ENCODE measurements at regions of chr12 and their contacts with region 1.

Region 1: GRCh38 chr12:108618079-108618952 is 15.4 kb downstream of the SELPLG start:
- DNase-seq: peak; percentile 76 to 84 (median 82)
- H3K4me3 ChIP-seq: no peak overlapping the region
- H3K27ac ChIP-seq: no peak overlapping the region
- H3K4me1 ChIP-seq: peaks cover 3 to 47% (median 20%) of the 10 kb centered on the region in 4 experiments
- H3K27me3 ChIP-seq: no peaks in the 10 kb centered on the region

Region 2: GRCh38 chr12:107779077-107779831 is 839.1 kb before region 1 on chr12:
- CTCF ChIA-PET with region 1: no interaction called
- POLR2A ChIA-PET with region 1: no interaction called
- DNase-seq: peak in 2 of 3 donors; percentile 60
- H3K4me3 ChIP-seq: no peak overlapping the region
- H3K27ac ChIP-seq: no peak overlapping the region
- H3K4me1 ChIP-seq: peaks cover 12 to 42% (median 36%) of the 10 kb centered on the region in 4 experiments
- H3K27me3 ChIP-seq: peaks cover 2 to 35% (median 22%) of the 10 kb centered on the region in 5 experiments

Region 3: DNA sequence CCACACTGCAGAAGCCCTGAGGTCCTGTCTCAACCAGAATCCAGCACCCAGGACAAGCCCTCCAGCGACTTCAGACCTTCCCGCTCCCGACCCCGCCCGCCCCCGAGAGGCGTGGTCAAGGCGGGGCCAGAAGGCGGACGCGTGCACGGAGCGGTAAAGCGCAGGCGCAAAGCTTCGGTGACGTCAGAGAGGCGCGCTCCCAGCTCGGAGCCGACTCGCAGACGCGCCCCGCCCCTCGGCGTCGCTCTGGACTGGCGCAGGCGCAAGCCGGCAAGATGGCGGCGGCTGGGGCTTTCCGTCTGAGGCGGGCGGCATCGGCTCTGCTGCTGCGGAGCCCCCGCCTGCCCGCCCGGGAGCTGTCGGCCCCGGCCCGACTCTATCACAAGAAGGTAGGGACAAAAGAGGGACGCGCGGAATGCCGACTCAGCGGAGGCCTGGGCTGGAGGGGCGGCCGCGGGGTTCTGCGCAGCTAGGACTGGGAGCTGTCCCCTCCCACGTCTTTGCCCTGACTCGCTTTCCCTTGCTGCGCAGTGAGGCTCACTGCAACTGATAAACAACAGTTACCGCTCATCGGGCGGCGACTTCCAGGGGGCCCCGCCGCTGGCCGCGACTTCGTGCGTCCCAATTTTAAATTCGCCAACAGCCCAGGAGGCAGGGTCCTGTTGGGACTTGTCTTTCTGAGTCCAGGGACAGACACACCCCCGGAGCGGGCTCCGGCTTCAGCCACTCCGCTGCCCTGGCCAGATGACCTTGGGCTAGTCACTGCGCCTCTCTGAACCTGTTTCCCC is 55.8 kb before region 1 on chr12 and contains the start of gene ISCU:
- CTCF ChIA-PET with region 1: interaction called, 591 read pairs
- POLR2A ChIA-PET with region 1: interaction called, 10 read pairs
- DNase-seq: peak; percentile 96 to 98 (median 97)
- H3K4me3 ChIP-seq: peak within 1 kb of the TSS; percentile 90 to 100 (median 99)
- H3K27ac ChIP-seq: peak within 1 kb of the TSS; percentile 96 to 99
- H3K4me1 ChIP-seq: peaks cover 41 to 79% (median 66%) of the 10 kb centered on the region in 4 experiments
- H3K27me3 ChIP-seq: no peaks in the 10 kb centered on the region

Region 4: GRCh38 chr12:108583991-108584390 is 34.3 kb before region 1 on chr12:
- CTCF ChIA-PET with region 1: interaction called, 17 read pairs
- POLR2A ChIA-PET with region 1: no interaction called
- DNase-seq: no peak
- H3K4me3 ChIP-seq: no peak overlapping the region
- H3K27ac ChIP-seq: no peak overlapping the region
- H3K4me1 ChIP-seq: no peaks in the 10 kb centered on the region
- H3K27me3 ChIP-seq: no peaks in the 10 kb centered on the region

Region 5: DNA sequence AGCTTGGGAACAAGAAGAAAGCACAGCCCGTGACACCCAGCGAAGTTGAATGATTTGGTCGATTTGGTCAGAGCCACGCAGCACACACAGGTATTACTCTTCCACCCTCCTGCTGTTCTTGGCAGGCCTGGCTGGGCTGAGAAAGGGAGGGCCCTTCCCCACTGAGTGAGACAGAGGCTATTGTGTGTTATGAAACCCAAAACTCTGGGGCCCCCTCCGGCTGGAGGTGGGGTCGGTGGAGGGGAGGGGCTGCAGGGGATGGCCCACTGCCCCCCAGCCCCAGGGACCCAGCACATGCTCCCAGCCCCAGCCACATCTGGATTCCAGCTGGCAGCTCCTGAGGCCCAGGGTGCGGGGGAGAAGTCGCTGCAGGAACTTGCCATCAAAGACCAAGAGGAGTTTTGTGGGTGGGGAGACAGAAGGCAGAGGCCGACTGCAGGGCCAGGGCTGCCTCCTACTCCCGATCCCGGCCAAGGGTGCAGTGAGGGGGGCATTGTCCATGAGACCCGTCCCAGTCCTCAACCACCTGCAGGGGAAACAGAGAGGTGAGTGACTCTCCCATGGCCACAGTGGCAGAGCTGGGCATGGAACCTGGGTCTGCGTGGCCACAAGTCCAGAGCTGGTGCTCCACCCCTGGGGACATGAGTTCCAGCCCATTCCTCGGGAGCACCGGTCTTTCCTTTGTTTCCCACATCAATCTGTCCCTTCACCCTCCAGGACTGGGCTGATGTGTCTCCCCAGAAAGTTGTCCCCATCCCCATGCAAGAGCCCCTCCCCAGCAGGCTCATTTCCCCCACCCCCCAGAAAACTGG is 29.1 kb before region 1 on chr12:
- CTCF ChIA-PET with region 1: interaction called, 17 read pairs
- POLR2A ChIA-PET with region 1: no interaction called
- DNase-seq: no peak
- H3K4me3 ChIP-seq: no peak overlapping the region
- H3K27ac ChIP-seq: no peak overlapping the region
- H3K4me1 ChIP-seq: no peaks in the 10 kb centered on the region
- H3K27me3 ChIP-seq: no peaks in the 10 kb centered on the region

Region 6: GRCh38 chr12:108633534-108634248 is 15.4 kb after region 1 on chr12 and contains the start of gene SELPLG:
- CTCF ChIA-PET with region 1: interaction called, 120 read pairs
- POLR2A ChIA-PET with region 1: interaction called, 4 read pairs
- DNase-seq: peak; percentile 82 to 94 (median 90)
- H3K4me3 ChIP-seq: peak within 1 kb of the TSS in 6 of 7 experiments; percentile 38 to 74 (median 60)
- H3K27ac ChIP-seq: peak within 1 kb of the TSS; percentile 68 to 87
- H3K4me1 ChIP-seq: peaks cover 35 to 98% (median 98%) of the 10 kb centered on the region in 4 experiments
- H3K27me3 ChIP-seq: no peaks in the 10 kb centered on the region

Region 7: GRCh38 chr12:108643941-108644810 is 25.9 kb after region 1 on chr12:
- CTCF ChIA-PET with region 1: interaction called, 20 read pairs
- POLR2A ChIA-PET with region 1: no interaction called
- DNase-seq: no peak
- H3K4me3 ChIP-seq: no peak overlapping the region
- H3K27ac ChIP-seq: no peak overlapping the region
- H3K4me1 ChIP-seq: peaks cover 6 to 56% (median 46%) of the 10 kb centered on the region in 4 experiments
- H3K27me3 ChIP-seq: no peaks in the 10 kb centered on the region

Measured in common myeloid progenitor, CD34-positive (primary cell).